MCF 10A (cell line): ENCODE measurements at regions of chr1 and their contacts with region 1.

Region 1: DNA sequence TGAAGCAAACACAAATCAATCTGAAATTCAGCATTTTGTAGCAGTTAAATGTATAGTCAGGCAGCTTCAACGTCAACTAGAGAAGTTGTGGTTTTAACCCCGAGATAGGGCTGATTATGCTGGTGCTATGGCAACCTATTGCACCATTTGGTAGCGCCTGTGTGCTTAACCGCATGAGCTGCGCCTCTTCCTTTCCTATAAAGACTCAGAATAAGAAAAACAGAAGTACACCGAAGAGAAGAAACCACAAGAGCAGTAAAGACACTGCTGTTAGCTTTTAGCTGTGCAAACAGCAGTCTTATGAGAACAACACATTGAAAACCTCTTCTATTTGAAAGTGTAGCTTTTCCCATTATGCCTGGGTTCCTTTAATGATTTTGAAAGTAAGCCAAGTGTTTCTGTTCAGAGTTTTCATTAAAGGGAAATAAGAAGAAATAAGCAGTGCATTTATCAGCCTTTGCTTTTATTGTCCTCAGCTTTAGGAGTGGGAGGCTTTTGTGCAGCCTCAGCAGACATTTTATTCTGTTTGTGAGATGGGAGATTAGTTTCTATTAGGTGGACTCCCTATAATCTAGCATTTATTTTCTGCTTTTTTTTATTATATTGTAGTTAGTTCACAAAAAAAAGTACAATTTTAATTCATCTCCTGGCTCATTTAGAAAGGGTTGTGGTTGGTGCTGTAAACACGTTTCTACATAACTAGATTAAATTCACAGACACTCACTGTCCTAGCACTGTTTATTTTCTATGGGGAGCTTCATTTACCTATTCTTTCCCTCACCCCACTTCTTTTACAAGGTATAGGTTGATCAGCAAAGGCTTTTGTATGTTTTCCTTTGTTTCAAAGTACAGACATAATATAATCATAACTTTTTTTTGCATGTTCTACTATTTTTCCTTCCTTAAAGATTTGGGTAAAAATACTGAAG is 43.3 kb downstream of the PTPRC start:
- DNase-seq: peak; percentile 94
- H3K4me3 Mint-ChIP-seq: peak overlapping the region; percentile 67
- H3K27ac Mint-ChIP-seq: peak overlapping the region; percentile 96
- H3K4me1 Mint-ChIP-seq: peaks cover 25% of the 10 kb centered on the region
- H3K27me3 Mint-ChIP-seq: no peaks in the 10 kb centered on the region
- CTCF ChIP-seq: no peak

Region 2: DNA sequence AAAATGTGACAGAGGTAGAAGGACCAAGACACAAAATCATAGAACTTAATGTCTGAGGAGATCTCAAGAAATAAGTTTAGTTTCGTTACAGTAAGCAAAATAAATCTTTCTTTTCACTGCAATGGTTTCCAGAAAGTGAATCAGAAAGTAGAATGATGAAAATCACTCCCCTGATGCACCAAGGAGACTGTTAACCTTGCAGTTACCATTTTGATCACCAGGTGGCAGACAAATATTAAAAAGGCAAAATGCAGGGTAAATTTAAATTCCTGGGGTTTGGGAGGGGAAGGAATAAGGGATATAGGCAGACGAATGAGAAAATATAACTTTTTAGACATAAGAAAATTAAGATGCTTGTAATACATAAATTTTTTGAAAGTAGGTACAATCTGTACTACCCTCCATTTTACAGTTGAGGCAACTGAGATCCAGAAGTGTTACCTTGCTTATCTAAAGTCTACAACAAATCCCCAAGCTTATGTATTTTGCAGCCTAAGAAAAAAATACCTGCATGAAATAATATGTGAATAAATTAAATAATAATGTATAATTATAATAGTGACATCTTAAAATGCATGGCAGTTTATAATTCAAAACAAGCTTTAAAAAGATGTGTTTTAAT is 1160.9 kb before region 1 on chr1:
- CTCF ChIA-PET with region 1: interaction called, 5 read pairs
- POLR2A ChIA-PET with region 1: no interaction called
- intact Hi-C with region 1: loop called (anchors 1 kb)
- DNase-seq: peak; percentile 67
- H3K4me3 Mint-ChIP-seq: no peak overlapping the region
- H3K27ac Mint-ChIP-seq: no peak overlapping the region
- H3K4me1 Mint-ChIP-seq: peaks cover 5% of the 10 kb centered on the region
- H3K27me3 Mint-ChIP-seq: no peaks in the 10 kb centered on the region
- CTCF ChIP-seq: peak; percentile 88

Region 3: GRCh38 chr1:197692965-197693364 is 989.1 kb before region 1 on chr1:
- CTCF ChIA-PET with region 1: no interaction called
- POLR2A ChIA-PET with region 1: no interaction called
- intact Hi-C with region 1: loop called (anchors 10 kb)
- DNase-seq: peak; percentile 46
- H3K4me3 Mint-ChIP-seq: no peak overlapping the region
- H3K27ac Mint-ChIP-seq: no peak overlapping the region
- H3K4me1 Mint-ChIP-seq: peaks cover 19% of the 10 kb centered on the region
- H3K27me3 Mint-ChIP-seq: no peaks in the 10 kb centered on the region
- CTCF ChIP-seq: peak; percentile 61

Region 4: DNA sequence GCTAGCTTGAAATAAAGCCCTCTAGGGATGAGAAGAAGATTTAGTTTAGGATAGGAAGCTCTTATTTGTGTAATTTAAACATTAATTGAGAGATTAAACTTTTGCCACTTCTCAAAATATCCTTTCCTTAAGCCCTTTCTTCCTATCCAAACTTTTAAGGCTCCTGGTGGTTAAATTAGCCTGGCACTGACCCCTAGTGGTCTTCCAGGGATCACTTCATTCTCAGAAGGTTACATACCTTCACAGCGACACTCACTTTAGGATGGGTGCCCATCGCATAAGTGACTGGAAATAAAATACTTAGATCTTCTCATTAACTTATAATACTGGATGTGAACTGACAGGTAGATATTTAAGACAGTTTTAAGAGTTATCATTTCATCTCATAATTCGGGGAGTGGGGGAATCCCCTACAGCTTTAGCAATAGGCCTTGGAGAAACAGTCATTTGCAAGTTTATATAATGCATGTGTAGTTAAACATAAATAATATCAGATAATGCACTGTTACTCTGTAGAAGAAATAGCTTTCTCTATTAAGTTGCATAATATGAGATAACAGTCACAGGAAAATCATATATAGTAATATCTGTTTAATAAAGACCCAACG is 757.5 kb before region 1 on chr1:
- CTCF ChIA-PET with region 1: interaction called, 5 read pairs
- POLR2A ChIA-PET with region 1: no interaction called
- intact Hi-C with region 1: loop called (anchors 5 kb)
- DNase-seq: peak; percentile 84
- H3K4me3 Mint-ChIP-seq: no peak overlapping the region
- H3K27ac Mint-ChIP-seq: no peak overlapping the region
- H3K4me1 Mint-ChIP-seq: peaks cover 5% of the 10 kb centered on the region
- H3K27me3 Mint-ChIP-seq: no peaks in the 10 kb centered on the region
- CTCF ChIP-seq: peak; percentile 84

Region 5: DNA sequence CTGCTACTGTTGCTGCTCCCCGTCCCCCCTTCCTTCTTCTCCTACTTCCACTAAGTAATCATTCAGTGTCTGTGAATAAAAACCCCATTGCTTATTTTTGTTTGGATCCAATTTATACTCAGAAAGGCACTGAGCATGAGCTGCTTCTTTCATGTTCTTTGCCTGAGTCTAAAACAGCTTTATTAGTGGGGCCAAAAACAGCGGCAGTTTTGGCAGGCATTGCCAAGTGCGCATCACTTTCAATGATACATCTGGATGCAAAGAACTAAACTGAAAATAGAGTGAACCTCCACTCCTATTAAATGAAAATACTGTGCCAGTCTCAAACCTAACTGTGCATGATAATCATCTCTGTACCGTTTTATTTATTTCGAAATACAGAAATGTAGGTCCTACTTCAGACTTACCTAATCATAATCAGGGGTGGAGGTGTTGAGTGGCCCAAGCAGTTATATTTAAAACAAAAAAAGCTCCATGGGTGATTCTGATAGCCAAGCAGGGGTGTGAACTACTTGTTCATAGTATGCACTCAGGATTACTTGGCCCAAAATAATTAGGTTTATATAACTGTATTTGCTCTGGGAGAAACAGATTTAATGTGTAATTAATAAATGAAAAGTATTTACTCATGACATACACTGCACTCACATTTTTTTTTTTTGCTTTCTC is 476.9 kb before region 1 on chr1:
- CTCF ChIA-PET with region 1: no interaction called
- POLR2A ChIA-PET with region 1: no interaction called
- intact Hi-C with region 1: loop called (anchors 5 kb)
- DNase-seq: no peak
- H3K4me3 Mint-ChIP-seq: peak overlapping the region; percentile 20
- H3K27ac Mint-ChIP-seq: peak overlapping the region; percentile 79
- H3K4me1 Mint-ChIP-seq: peaks cover 21% of the 10 kb centered on the region
- H3K27me3 Mint-ChIP-seq: no peaks in the 10 kb centered on the region
- CTCF ChIP-seq: no peak

Region 6: GRCh38 chr1:198359024-198359653 is 323.0 kb before region 1 on chr1:
- CTCF ChIA-PET with region 1: no interaction called
- POLR2A ChIA-PET with region 1: no interaction called
- intact Hi-C with region 1: loop called (anchors 5 kb)
- DNase-seq: peak; percentile 62
- H3K4me3 Mint-ChIP-seq: no peak overlapping the region
- H3K27ac Mint-ChIP-seq: no peak overlapping the region
- H3K4me1 Mint-ChIP-seq: peaks cover 10% of the 10 kb centered on the region
- H3K27me3 Mint-ChIP-seq: no peaks in the 10 kb centered on the region
- CTCF ChIP-seq: peak; percentile 75

Region 7: GRCh38 chr1:198669023-198669698 is 12.9 kb before region 1 on chr1:
- CTCF ChIA-PET with region 1: interaction called, 6 read pairs
- POLR2A ChIA-PET with region 1: interaction called, 43 read pairs
- intact Hi-C with region 1: no loop called
- DNase-seq: peak; percentile 92
- H3K4me3 Mint-ChIP-seq: no peak overlapping the region
- H3K27ac Mint-ChIP-seq: peak overlapping the region; percentile 95
- H3K4me1 Mint-ChIP-seq: peaks cover 49% of the 10 kb centered on the region
- H3K27me3 Mint-ChIP-seq: no peaks in the 10 kb centered on the region
- CTCF ChIP-seq: no peak